H1 (cell line): ENCODE measurements at regions of chr12 and their contacts with region 1.

Region 1: GRCh38 chr12:131755305-131756113 is 44.6 kb downstream of the SFSWAP start:
- DNase-seq: no peak
- H3K4me3 ChIP-seq: no peak overlapping the region
- H3K27ac ChIP-seq: no peak overlapping the region
- H3K4me1 ChIP-seq: peaks cover 3 to 21% (median 10%) of the 10 kb centered on the region in 4 experiments
- H3K27me3 ChIP-seq: no peaks in the 10 kb centered on the region
- CTCF ChIP-seq: peak; percentile 54 to 85 (median 64)
- EP300 ChIP-seq: no peak
- POLR2A ChIP-seq: no peak
- RAD21 ChIP-seq: peak; percentile 58 to 67

Region 2: DNA sequence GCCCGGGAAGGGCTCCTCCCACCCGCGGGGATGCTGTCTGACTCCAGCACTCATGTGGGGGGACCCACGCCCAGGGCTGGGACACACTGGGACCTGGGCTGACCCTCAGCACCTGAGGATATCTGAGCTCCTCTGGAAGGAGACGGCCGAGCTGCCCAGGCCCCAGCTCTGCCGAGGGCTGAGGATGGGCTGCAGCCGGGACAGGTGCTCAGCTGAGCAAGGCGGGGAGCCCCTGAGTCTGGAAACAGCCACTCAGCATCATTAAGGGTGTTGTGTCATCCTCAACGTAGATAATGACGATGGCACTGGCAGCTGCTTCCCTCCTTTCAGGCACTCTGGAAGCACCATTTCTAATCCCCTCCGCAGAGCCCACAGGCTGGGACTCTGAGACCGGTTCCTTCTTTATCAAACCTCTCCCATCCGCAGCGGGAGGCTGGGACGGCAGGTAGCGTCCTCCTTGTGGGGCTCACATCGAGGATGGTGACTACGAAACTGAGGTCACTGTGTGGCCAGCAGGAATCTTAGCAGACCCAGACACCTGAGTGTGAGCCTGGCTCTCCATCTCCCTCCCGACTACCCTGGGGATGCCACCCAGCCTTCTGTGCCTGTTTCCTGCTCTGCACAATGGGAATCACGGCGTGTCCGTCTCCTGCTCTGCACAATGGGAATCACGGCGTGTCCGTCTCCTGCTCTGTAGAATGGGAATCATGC is 71.3 kb before region 1 on chr12:
- CTCF ChIA-PET with region 1: no interaction called
- POLR2A ChIA-PET with region 1: no interaction called
- DNase-seq: no peak
- H3K4me3 ChIP-seq: no peak overlapping the region
- H3K27ac ChIP-seq: no peak overlapping the region
- H3K4me1 ChIP-seq: peaks cover 0 to 15% (median 7%) of the 10 kb centered on the region in 4 experiments; a peak in 5 of 7 replicates
- H3K27me3 ChIP-seq: no peaks in the 10 kb centered on the region
- CTCF ChIP-seq: no peak
- EP300 ChIP-seq: no peak
- POLR2A ChIP-seq: no peak
- RAD21 ChIP-seq: no peak

Region 3: GRCh38 chr12:131737142-131737827 is 18.2 kb before region 1 on chr12:
- CTCF ChIA-PET with region 1: interaction called, 56 read pairs
- POLR2A ChIA-PET with region 1: interaction called, 3 read pairs
- DNase-seq: peak in 1 of 2 experiments; percentile 61
- H3K4me3 ChIP-seq: no peak overlapping the region
- H3K27ac ChIP-seq: no peak overlapping the region
- H3K4me1 ChIP-seq: peaks cover 0 to 7% (median 4%) of the 10 kb centered on the region in 4 experiments; a peak in 4 of 7 replicates
- H3K27me3 ChIP-seq: no peaks in the 10 kb centered on the region
- CTCF ChIP-seq: no peak
- EP300 ChIP-seq: no peak
- POLR2A ChIP-seq: no peak
- RAD21 ChIP-seq: no peak

Region 4: GRCh38 chr12:131773582-131774221 is 18.2 kb after region 1 on chr12:
- CTCF ChIA-PET with region 1: interaction called, 25 read pairs
- POLR2A ChIA-PET with region 1: no interaction called
- DNase-seq: no peak
- H3K4me3 ChIP-seq: no peak overlapping the region
- H3K27ac ChIP-seq: no peak overlapping the region
- H3K4me1 ChIP-seq: peaks cover 9 to 28% (median 18%) of the 10 kb centered on the region in 4 experiments
- H3K27me3 ChIP-seq: no peaks in the 10 kb centered on the region
- CTCF ChIP-seq: no peak
- EP300 ChIP-seq: no peak
- POLR2A ChIP-seq: no peak
- RAD21 ChIP-seq: no peak

Region 5: GRCh38 chr12:131783915-131784541 is 28.5 kb after region 1 on chr12:
- CTCF ChIA-PET with region 1: interaction called, 14 read pairs
- POLR2A ChIA-PET with region 1: no interaction called
- DNase-seq: no peak
- H3K4me3 ChIP-seq: no peak overlapping the region
- H3K27ac ChIP-seq: no peak overlapping the region
- H3K4me1 ChIP-seq: peaks cover 8 to 20% (median 12%) of the 10 kb centered on the region in 4 experiments
- H3K27me3 ChIP-seq: no peaks in the 10 kb centered on the region
- CTCF ChIP-seq: no peak
- EP300 ChIP-seq: no peak
- POLR2A ChIP-seq: no peak
- RAD21 ChIP-seq: no peak; a peak in 1 of 4 replicates

Region 6: DNA sequence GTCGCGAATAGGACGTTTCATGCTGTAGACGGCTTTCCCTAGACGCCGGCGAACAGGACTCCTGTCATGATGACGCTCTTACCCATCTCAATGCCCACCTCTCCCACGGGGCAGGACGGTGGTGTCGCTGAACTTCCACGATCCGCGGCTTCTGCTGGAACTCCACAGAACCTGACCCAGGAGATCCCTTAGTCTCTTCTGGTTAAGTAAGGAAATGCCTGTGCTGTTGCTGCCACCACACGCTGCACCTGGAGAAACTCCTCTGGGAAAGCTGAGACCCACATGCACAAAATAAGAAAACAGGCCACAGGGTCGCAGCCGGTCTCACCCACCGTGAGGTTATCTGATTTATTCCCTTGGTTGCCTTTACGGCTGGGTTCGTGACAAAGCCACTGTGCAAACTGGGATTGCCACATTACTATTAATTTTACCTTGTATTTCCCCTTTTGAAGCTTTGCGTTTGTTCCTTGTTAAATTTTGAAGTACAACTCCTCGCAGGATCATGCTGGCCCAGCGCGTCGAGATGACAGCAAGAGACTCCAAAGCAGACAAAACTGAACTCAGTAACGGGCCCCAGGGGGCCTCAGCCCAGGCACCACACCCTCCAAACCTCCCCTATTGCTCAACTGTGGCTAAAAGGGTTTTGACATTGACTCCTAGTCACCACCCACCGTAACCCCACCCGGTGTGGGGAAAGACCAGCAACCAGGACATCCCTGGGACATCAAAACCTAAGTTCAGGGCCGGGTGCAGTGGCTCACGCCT is 63.5 kb after region 1 on chr12:
- CTCF ChIA-PET with region 1: no interaction called
- POLR2A ChIA-PET with region 1: no interaction called
- DNase-seq: no peak
- H3K4me3 ChIP-seq: no peak overlapping the region
- H3K27ac ChIP-seq: no peak overlapping the region
- H3K4me1 ChIP-seq: no peaks in the 10 kb centered on the region
- H3K27me3 ChIP-seq: no peaks in the 10 kb centered on the region; a peak in 1 of 7 replicates
- CTCF ChIP-seq: no peak
- EP300 ChIP-seq: no peak
- POLR2A ChIP-seq: no peak
- RAD21 ChIP-seq: peak; percentile 25; a peak in 2 of 4 replicates

Region 7: GRCh38 chr12:131944601-131945251 is 189.2 kb after region 1 on chr12:
- CTCF ChIA-PET with region 1: no interaction called
- POLR2A ChIA-PET with region 1: no interaction called
- DNase-seq: no peak
- H3K4me3 ChIP-seq: no peak overlapping the region
- H3K27ac ChIP-seq: no peak overlapping the region
- H3K4me1 ChIP-seq: peaks cover 0 to 3% (median 1%) of the 10 kb centered on the region in 4 experiments; a peak in 4 of 7 replicates
- H3K27me3 ChIP-seq: no peaks in the 10 kb centered on the region
- CTCF ChIP-seq: no peak
- EP300 ChIP-seq: no peak
- POLR2A ChIP-seq: no peak
- RAD21 ChIP-seq: no peak

Region 8: DNA sequence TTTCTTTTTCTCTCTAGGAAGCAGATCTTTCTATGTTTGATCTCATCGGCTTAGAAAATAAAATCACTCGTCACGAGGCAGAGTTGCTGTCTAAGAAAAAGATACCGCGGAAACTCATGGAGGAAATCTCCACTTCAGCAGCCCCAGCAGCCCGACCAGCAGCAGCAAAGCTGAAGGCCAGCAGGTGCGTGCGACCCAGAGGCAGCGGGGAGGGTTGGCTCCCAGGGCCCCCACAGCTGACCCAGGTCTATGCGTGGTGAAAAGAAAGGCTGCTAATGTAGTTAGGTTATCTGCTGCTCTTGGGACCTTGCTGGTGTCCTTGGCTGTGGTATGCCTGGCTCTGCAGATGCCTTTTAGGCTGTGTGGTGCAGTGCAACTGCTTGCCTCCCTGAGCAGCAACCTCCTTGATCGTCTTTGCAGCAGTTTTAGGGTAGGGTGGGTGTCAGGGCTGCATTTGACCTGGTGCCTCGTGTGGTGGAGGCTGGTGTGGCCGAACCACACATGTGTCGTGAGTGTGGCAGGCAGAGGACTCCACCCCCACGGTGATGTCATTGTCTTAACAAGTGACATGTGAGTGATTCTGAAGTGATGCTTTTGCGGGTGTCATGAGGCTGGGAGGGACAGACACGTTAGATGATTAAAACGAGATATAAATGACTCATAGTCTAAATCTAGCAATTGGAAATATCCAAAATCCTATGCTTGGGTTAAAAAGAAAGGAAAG is 262.8 kb after region 1 on chr12:
- CTCF ChIA-PET with region 1: no interaction called
- POLR2A ChIA-PET with region 1: no interaction called
- DNase-seq: no peak
- H3K4me3 ChIP-seq: no peak overlapping the region
- H3K27ac ChIP-seq: no peak overlapping the region
- H3K4me1 ChIP-seq: no peaks in the 10 kb centered on the region; a peak in 2 of 7 replicates
- H3K27me3 ChIP-seq: no peaks in the 10 kb centered on the region
- CTCF ChIP-seq: peak in 1 of 3 experiments; percentile 8; a peak in 1 of 4 replicates
- EP300 ChIP-seq: no peak
- POLR2A ChIP-seq: no peak
- RAD21 ChIP-seq: no peak